ENCODE measurements at regions of chr20 and their contacts with region 1.

Region 1: DNA sequence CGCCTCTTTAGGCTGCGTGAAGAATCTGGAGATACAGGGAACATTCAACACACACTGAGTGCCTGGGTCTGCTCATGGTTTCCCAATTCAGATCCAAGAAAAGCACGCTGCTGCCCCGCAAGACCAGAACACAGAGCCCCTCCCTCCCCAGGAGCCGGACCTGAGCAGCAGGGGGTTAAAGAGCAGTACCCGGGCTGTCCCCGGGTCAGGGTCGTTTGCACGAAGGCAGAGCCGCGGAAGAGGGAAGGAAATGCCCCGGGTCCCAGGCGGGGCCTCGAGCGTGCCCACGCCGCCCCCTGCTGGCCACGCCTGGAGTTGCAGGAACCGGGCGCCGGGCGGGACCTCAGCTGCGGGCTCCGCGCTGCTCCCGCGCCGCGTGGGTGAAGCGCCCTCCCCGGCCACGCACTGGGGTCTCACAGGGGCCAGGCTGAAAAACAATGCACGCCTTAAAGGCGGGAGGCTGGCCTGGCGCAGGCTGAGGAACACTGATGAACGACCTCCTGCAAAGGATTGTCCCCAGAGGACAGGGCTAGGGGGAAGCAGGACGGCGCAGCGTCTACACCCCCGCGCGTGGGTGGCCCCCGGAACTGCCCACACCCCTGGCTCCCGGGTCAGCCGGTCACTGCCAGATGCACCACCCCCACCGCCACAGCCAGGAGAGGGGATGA is 48.9 kb downstream of the ANKRD60 start:
- DNase-seq: peak; percentile 64
- H3K4me3 Mint-ChIP-seq: peak overlapping the region; percentile 42
- H3K27ac Mint-ChIP-seq: no peak overlapping the region
- H3K4me1 Mint-ChIP-seq: peaks cover 9% of the 10 kb centered on the region
- H3K27me3 Mint-ChIP-seq: peaks cover 12% of the 10 kb centered on the region

Region 2: DNA sequence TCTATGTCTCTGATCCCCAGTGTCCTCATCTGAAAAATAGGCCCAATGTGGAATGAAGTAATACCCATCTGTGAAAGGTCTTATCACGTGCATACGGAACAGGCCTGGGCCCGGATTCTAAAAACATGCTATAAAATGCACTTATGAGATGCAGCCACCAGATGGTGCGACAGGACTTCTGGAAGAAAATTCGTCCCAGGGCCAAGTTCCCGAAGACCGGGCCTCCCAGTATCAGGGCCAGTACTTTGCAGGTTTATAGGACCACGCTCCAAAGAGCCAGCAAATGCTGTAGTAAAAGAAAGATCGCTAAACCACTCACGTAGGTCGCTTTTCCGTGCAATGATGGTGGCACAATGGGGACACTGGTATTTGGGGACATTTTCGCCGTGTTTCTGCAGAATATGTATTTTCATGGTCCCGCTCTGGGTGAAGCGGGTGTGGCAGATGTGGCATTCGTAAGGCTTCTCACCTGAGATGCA is 665.3 kb before region 1 on chr20:
- CTCF ChIA-PET with region 1: no interaction called
- intact Hi-C with region 1: loop called (anchors 10 kb)
- DNase-seq: peak; percentile 58
- H3K4me3 Mint-ChIP-seq: no peak overlapping the region
- H3K27ac Mint-ChIP-seq: no peak overlapping the region
- H3K4me1 Mint-ChIP-seq: no peaks in the 10 kb centered on the region
- H3K27me3 Mint-ChIP-seq: peaks cover 13% of the 10 kb centered on the region

Region 3: DNA sequence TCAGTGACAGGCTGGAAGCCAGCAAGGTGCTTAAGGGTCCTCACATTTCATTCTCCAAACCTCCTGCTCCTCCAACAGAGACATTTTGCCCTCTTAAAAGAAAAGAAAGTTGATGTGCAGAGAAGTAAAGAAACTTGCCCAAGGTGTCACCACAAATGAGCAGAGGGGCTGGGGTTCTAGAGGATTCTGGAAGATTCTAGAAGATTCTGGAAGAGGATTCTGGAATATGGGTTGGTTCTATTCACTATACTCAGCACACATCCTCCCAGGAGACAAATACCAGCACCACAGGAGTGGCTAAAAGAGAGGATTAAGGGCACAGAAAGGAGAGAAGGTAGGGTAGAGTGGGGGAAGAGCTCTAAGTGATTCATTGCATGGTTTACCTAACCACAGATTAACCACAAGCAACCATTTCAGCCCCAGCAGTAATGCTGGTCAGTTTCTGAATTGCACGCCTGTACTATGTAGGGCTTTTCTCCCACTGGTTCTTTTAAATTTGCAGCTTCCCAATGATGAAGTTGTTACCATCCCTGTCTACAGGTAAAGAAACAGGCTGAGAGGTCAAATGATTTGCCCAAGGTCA is 277.2 kb before region 1 on chr20:
- CTCF ChIA-PET with region 1: no interaction called
- intact Hi-C with region 1: no loop called
- DNase-seq: no peak
- H3K4me3 Mint-ChIP-seq: no peak overlapping the region
- H3K27ac Mint-ChIP-seq: no peak overlapping the region
- H3K4me1 Mint-ChIP-seq: no peaks in the 10 kb centered on the region
- H3K27me3 Mint-ChIP-seq: peaks cover 6% of the 10 kb centered on the region

Region 4: DNA sequence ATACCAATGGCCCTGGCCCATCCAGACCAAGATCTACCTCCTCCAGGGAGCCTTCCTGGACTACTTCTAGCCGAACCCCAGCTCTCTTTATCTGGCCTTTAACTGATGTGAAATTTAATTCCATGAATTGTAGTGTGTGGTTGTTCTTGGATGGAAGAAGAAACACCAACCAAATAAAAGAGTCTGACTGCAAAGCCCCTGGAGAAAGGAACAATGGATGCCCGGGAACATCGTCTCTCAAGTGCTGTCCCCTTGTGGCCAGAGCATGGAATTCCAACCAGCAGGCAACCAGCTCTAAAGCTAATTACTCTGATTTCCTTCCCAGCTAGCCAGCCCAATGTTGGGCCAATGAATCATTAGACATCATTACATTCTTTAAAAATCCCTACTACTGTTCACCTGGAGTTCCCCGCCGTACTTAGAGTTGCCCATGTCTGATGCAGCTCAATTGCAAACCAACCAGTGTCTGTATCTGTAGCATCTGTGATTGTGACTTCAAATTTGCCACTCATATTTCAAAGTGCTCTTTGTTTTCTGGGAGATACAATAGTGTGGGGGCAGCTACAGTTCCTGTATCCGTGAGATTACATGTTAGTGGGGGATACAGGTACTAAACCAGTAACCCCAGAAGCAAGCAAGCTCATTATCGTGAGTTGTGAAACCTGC is 92.2 kb before region 1 on chr20:
- CTCF ChIA-PET with region 1: interaction called, 16 read pairs
- intact Hi-C with region 1: loop called (anchors 10 kb)
- DNase-seq: peak; percentile 45
- H3K4me3 Mint-ChIP-seq: no peak overlapping the region
- H3K27ac Mint-ChIP-seq: no peak overlapping the region
- H3K4me1 Mint-ChIP-seq: no peaks in the 10 kb centered on the region
- H3K27me3 Mint-ChIP-seq: no peaks in the 10 kb centered on the region

Region 5: DNA sequence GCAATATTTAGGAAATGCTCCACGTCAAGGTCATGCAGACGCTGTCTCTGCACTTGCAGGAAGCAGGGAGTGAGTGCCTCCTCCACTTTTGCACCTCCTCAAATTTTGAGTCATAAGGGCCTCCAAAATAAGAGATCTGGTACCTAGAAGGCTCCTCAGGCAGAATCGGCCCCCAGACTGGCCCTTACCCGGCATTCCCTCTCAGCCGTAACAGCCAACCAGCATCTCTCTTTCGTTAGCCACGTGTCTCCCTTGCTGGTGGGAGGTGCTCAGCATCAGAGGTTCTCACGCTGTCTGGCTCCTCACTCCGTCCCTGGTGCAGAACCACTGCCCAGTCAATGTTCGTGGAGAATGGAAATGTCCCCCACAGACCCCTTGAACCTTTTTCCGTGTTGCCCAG is 26.4 kb before region 1 on chr20:
- CTCF ChIA-PET with region 1: no interaction called
- intact Hi-C with region 1: no loop called
- DNase-seq: no peak
- H3K4me3 Mint-ChIP-seq: no peak overlapping the region
- H3K27ac Mint-ChIP-seq: no peak overlapping the region
- H3K4me1 Mint-ChIP-seq: no peaks in the 10 kb centered on the region
- H3K27me3 Mint-ChIP-seq: peaks cover 39% of the 10 kb centered on the region

Region 6: DNA sequence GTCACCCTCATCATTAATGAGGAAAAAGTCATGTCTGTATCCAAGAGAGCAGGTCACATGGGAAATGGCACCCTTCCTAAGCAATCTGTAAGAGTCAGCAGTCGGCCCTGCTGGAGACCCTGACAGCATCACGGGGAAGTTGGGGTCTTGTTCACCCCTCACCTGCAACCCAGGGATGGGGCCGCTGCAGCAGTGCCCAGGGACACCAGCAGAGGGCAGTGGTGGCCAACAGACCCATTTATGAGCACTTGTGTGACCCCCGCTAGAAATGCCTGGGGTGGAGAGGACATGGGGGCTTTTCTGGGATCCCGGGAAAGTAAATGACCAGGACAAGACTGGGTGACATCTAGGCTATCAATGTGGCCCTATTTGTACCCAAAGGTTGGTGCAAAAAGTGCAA is 13.0 kb after region 1 on chr20:
- CTCF ChIA-PET with region 1: interaction called, 10 read pairs
- intact Hi-C with region 1: no loop called
- DNase-seq: peak; percentile 43
- H3K4me3 Mint-ChIP-seq: no peak overlapping the region
- H3K27ac Mint-ChIP-seq: no peak overlapping the region
- H3K4me1 Mint-ChIP-seq: no peaks in the 10 kb centered on the region
- H3K27me3 Mint-ChIP-seq: peaks cover 3% of the 10 kb centered on the region